ENCODE measurements at regions of chr17 and their contacts with region 1.

Region 1: DNA sequence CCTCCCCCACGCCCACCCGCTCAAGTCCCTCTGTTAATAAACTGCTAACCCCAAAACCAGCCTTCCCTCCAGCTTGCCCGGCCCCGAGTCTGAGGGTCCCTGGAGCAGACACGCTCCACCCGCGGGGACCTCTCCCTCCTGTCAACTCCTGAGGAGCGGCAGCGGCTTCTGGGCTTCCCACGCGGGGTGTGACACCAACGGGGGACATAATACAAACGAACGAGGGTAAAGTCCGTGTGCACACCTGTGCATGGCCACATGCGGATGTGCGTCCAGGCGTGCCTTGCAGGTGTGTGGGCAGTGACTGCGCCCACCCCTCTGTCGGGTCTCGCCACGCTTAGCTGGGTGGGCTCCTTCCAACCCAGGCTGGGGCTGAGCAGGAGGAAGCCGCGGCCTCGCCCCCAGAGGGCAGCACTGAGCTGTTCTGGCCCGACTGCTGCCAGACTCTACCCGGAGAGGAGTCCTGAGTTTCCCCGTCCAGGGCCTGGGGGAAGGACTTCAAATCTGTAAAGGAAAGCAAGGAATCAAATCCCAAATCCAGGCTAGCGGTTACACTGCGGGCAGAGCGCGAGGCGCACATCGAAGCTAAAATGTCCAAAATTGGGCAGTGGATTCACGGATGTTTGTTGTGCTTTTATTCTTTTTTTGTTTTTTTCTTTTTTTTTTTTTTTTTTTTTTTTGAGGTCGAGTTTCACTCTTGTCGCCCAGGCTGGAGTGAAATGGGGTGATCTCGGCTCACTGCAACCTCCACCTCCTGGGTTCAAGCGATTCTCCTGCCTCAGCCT is 24.2 kb upstream of the KRT17 start:
- DNase-seq: peak; percentile 92 to 93
- ATAC-seq: peak; percentile 84 to 94
- H3K4me3 ChIP-seq: peak overlapping the region; percentile 48
- H3K27ac ChIP-seq: peak overlapping the region; percentile 85 to 89
- H3K4me1 ChIP-seq: peaks cover 40% of the 10 kb centered on the region
- CTCF ChIP-seq: peak; percentile 93
- EP300 ChIP-seq: no peak
- POLR2A ChIP-seq: peak; percentile 38
- RAD21 ChIP-seq: peak; percentile 66 to 69

Region 2: DNA sequence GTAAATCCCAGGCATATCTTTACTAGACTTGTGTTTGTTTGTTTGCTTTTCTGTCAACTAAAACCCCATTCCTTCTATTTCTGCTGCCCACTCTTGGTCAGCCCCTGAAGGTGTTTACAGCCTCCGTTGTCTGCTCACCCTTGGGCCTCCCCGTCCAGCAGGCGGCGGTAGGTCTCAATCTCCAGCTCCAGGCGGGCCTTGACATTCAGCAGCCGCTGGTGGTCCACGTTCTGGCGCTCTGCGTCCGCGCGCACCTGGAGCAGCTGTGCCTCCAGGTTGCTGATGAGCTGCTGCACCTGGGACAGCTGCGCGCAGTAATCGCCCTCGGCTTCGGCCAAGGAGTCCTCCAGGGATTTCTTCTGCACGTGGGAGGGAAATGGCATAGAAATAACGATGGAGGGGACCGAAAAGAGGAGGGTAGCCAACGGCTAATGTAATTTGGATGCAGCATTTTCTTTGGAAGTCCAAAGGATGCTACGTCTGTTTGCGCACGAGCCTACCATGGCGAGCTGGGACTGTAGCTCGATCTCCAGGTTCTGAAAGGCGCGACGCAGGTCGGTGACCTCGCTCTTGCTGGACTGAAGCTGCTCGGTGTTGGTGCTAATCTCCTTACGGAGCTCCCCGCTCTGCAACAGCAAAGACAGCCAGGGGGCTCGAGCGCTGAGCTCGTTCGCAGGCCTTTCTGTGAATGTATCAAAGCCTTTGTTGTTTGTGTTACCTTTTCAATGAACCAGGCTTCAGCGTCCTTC is 785.4 kb before region 1 on chr17:
- CTCF ChIA-PET with region 1: interaction called, 418 read pairs
- POLR2A ChIA-PET with region 1: no interaction called
- DNase-seq: no peak
- ATAC-seq: peak in 1 of 2 experiments; percentile 47; a peak in 3 of 6 replicates
- H3K4me3 ChIP-seq: no peak overlapping the region
- H3K27ac ChIP-seq: peak overlapping the region in 1 of 2 experiments; percentile 6; a peak in 1 of 6 replicates
- H3K4me1 ChIP-seq: peaks cover 15% of the 10 kb centered on the region; the same call in 2 of the 3 replicates
- CTCF ChIP-seq: no peak
- EP300 ChIP-seq: no peak
- POLR2A ChIP-seq: no peak
- RAD21 ChIP-seq: peak in 1 of 2 experiments; percentile 33; a peak in 1 of 5 replicates

Region 3: GRCh38 chr17:41329281-41329948 is 319.2 kb before region 1 on chr17:
- CTCF ChIA-PET with region 1: interaction called, 28 read pairs
- POLR2A ChIA-PET with region 1: no interaction called
- DNase-seq: peak; percentile 78 to 79
- ATAC-seq: peak; percentile 75 to 95
- H3K4me3 ChIP-seq: no peak overlapping the region
- H3K27ac ChIP-seq: peak overlapping the region in 1 of 2 experiments; percentile 44; a peak in 1 of 6 replicates
- H3K4me1 ChIP-seq: no peaks in the 10 kb centered on the region
- CTCF ChIP-seq: peak; percentile 73
- EP300 ChIP-seq: no peak
- POLR2A ChIP-seq: no peak
- RAD21 ChIP-seq: peak; percentile 88 to 95

Region 4: GRCh38 chr17:41496820-41497408 is 151.7 kb before region 1 on chr17:
- CTCF ChIA-PET with region 1: interaction called, 24 read pairs
- POLR2A ChIA-PET with region 1: no interaction called
- DNase-seq: peak; percentile 91 to 95
- ATAC-seq: peak; percentile 91 to 99
- H3K4me3 ChIP-seq: no peak overlapping the region
- H3K27ac ChIP-seq: peak overlapping the region; percentile 76 to 88
- H3K4me1 ChIP-seq: peaks cover 27% of the 10 kb centered on the region
- CTCF ChIP-seq: peak; percentile 80
- EP300 ChIP-seq: no peak
- POLR2A ChIP-seq: peak; percentile 43
- RAD21 ChIP-seq: peak; percentile 89 to 92

Region 5: DNA sequence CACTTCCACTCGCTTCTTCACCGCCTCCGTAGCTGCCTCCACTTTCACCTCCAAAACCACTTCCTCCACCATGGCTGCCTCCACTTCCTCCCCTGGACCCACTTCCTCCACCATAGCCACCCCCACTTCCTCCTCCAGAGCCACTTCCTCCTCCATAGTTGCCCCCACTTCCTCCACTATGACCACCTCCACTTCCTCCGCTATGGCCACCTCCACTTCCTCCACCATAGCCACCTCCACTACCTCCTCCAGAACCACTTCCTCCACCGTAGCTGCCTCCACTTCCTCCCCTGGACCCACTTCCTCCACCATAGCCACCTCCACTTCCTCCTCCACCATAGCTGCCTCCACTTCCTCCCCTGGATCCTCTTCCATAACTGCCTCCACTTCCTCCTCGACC is 81.3 kb before region 1 on chr17:
- CTCF ChIA-PET with region 1: interaction called, 100 read pairs
- POLR2A ChIA-PET with region 1: interaction called, 3 read pairs
- DNase-seq: no peak
- ATAC-seq: no peak
- H3K4me3 ChIP-seq: no peak overlapping the region
- H3K27ac ChIP-seq: no peak overlapping the region
- H3K4me1 ChIP-seq: no peaks in the 10 kb centered on the region
- CTCF ChIP-seq: no peak
- EP300 ChIP-seq: no peak
- POLR2A ChIP-seq: no peak
- RAD21 ChIP-seq: no peak

Region 6: DNA sequence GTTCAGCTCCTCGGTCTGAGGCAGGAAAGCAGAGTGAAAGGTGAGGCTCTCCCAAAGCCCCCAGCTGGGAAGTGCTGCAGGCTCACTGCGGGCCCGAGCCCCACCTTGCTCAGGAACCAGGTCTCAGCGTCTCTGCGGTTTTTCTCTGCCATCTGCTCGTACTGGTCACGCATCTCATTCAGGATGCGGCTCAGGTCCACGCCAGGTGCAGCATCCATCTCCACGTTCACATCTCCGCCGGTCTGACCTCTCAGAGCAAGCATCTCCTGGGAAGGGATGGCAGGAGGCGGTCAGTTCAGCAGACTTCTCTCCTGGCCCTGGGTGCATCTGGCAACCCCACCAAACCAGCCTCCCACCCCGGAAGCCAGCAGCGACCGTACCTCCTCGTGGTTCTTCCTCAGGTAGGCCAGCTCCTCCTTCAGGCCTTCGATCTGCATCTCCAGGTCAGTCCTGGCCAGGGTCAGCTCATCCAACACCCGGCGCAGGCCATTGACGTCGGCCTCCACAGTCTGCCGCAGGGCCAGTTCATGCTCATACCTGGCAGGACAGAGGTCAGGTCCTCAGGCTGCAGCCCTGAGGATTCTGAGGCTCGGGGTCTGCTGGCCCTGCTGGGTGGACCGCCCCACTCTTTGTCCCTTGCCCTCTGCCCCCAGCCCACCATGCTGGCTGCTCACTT is 37.5 kb before region 1 on chr17:
- CTCF ChIA-PET with region 1: interaction called, 12 read pairs
- POLR2A ChIA-PET with region 1: no interaction called
- DNase-seq: no peak
- ATAC-seq: no peak; a peak in 1 of 6 replicates
- H3K4me3 ChIP-seq: no peak overlapping the region
- H3K27ac ChIP-seq: no peak overlapping the region
- H3K4me1 ChIP-seq: peaks cover 12% of the 10 kb centered on the region
- CTCF ChIP-seq: no peak
- EP300 ChIP-seq: no peak
- POLR2A ChIP-seq: no peak
- RAD21 ChIP-seq: no peak

Region 7: DNA sequence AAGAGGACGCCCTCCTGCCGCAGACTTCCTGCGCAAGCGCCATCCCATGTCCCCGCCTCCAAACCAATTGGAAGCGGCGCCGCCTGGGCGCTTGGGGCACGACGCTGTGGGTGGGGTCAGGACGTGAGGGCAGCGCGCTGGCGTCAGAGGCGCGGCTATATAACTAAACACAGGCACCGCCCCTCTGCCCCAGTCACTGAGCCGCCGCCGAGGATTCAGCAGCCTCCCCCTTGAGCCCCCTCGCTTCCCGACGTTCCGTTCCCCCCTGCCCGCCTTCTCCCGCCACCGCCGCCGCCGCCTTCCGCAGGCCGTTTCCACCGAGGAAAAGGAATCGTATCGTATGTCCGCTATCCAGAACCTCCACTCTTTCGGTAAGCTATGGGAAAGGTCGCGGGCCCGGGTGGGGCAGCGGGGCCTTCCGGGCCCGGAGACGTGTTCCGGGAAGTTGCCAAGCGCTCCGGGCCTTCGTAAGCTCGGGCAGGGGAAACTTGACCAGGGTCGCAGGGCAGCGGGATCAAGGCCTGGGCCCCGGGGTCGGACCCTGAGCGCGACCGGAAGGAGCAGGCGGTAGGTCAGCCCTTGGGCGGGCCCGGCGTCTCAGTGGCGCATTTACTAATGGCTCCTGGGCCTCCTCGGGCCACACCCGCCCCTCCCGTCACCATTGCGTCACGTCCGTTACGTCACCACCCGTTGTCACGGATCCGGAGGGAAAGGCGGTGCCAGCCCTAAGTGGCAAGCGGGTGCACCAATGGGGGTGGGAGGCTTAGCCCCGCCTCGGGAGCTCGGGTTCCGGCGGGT is 40.3 kb after region 1 on chr17 and contains the start of gene EIF1:
- CTCF ChIA-PET with region 1: interaction called, 11 read pairs
- POLR2A ChIA-PET with region 1: interaction called, 4 read pairs
- DNase-seq: peak; percentile 98 to 100
- ATAC-seq: peak; percentile 71 to 83
- H3K4me3 ChIP-seq: peak within 1 kb of the TSS; percentile 93
- H3K27ac ChIP-seq: peak within 1 kb of the TSS; percentile 95 to 98
- H3K4me1 ChIP-seq: peaks cover 29% of the 10 kb centered on the region
- CTCF ChIP-seq: no peak
- EP300 ChIP-seq: peak in 1 of 2 experiments; percentile 52; a peak in 1 of 5 replicates
- POLR2A ChIP-seq: peak; percentile 92
- RAD21 ChIP-seq: no peak
- polyA plus RNA-seq, gene EIF1: 873 and 1,224 TPM in 2 replicates

Region 8: DNA sequence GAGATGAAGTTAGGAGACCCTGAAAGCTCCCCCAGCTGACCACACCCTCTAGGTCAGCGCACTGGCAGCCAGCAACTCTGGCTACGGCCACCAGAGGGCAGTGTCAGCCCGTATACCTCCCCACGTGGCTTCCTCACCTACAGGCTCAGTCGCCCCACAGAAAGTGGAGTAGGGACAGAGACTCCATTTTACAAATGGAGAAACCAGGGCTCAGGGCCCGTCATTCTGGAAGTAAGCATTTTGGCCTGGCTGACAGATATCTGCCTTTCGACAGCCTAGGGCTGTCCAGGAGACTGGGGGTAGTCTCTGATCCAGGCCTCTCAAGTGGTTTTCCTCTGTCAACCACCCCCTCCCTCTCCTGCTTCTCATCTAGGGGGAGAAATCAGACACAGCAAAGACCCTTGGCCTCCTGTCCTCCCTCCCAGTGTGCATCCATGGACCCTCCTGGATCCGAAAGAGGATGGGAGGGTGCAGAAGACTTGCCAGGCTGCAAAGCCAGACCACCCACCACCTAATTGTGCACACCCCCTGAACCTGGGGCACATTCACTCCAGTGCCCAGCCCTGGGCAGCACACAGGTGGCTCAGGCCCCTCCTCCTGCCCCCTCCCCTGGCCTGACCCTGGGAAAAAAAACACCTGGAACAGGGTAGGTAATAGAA is 89.6 kb after region 1 on chr17:
- CTCF ChIA-PET with region 1: no interaction called
- POLR2A ChIA-PET with region 1: no interaction called
- DNase-seq: peak; percentile 89 to 96
- ATAC-seq: peak; percentile 55 to 82
- H3K4me3 ChIP-seq: no peak overlapping the region
- H3K27ac ChIP-seq: peak overlapping the region; percentile 68 to 85
- H3K4me1 ChIP-seq: peaks cover 38% of the 10 kb centered on the region
- CTCF ChIP-seq: peak; percentile 99
- EP300 ChIP-seq: no peak
- POLR2A ChIP-seq: no peak
- RAD21 ChIP-seq: peak; percentile 100